WTC11 (cell line): ENCODE measurements at regions of chr6 and their contacts with region 1.

Region 1: DNA sequence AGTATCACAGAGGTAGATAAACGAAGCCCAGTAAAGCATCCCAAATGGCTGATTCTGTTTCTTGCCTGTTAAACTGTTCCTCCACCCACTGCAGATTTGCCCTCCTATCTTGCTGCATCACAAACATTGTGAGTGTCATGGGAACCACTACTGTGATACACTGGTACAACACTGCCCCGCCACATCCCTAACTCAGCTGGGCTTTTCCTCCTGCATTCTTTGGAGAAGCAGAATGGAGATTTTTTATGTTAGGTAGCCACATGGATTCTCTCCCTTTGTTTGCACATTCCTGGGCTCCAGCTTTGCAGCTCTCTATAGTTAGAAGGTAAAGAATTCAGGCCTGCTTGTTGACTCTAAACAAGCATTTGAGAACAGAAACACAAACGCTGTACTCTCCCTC is 234.1 kb downstream of the TMEM242 start:
- DNase-seq: peak; percentile 70
- ATAC-seq: peak; percentile 83
- H3K4me3 Mint-ChIP-seq: 0 out of 2 replicates have a peak overlapping the region, but pooled peaks have one; percentile 22
- H3K27ac Mint-ChIP-seq: peak overlapping the region; percentile 92
- H3K4me1 Mint-ChIP-seq: peaks cover 54% of the 10 kb centered on the region
- H3K27me3 Mint-ChIP-seq: no peaks in the 10 kb centered on the region
- CTCF ChIP-seq: no peak

Region 2: DNA sequence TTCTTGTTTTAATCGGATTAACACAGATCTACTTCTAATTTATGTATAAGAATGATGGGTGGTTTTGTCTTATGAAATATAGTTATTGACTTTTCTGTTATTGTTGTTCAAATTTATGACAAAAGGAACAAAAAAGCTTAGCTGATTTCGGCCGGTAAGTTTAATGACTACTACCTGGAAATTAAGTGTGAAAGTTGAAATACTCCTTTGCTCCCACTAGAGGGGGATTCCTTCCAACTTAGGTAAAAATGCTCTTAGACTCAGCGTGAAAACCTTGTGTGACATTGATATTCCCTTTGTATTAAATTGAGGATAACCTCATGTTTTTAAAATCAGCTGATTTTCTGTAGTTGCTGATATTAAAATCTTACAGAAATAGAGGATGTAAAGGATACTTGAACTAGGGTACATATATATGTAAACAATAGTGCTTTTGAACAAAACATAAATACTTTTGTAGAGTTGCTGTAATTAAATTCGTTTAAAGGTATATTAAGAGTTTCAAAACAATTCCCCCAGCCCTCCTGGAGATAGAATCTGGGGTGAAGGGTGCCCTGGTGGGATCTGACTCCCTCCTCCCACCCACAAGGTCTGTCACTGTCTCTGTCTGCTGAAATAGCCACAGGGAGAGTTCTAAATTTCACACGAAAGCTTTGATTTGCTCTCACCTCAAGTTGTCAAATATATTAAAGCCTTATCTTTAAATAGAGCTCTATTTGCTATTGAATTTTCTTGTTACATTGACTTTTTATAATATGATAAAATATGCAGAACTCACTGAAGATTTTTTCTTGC is 54.6 kb before region 1 on chr6:
- CTCF ChIA-PET with region 1: interaction called, 10 read pairs
- POLR2A ChIA-PET with region 1: no interaction called
- DNase-seq: no peak
- ATAC-seq: no peak
- H3K4me3 Mint-ChIP-seq: no peak overlapping the region
- H3K27ac Mint-ChIP-seq: peak overlapping the region; percentile 27; the same call in 1 of the 2 replicates
- H3K4me1 Mint-ChIP-seq: peaks cover 30% of the 10 kb centered on the region
- H3K27me3 Mint-ChIP-seq: no peaks in the 10 kb centered on the region
- CTCF ChIP-seq: peak; percentile 49